ENCODE measurements at regions of chr2 and their contacts with region 1.

Region 1: DNA sequence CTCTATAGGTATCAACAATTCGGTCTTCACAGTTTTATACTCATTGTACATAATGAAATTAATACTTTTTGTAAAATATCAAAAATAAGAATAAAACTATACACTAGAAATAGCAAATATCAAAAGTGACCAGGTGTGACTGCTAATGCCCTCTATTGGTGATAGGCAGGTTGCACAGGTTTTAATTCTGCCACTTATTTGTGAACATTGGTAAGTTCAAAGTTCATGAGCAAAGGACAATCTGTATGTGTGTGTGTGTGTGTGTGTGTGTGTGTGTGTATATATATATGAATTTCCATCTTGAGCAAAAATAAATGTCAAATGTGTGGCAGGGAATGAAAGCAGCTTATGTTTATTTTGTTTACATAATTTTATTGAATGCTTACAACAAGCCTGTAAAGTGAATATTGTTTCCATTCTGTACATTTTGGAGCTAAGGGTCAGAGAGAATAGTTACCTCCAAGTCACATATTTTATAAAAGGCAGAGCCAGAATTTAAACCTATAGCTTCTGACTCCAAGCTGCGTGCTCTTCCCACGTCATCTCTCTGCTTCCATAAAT is 537.4 kb downstream of the CPS1 start:
- DNase-seq: peak; percentile 62
- ATAC-seq: peak; percentile 52
- H3K4me3 ChIP-seq: no peak overlapping the region
- H3K27ac ChIP-seq: no peak overlapping the region
- H3K4me1 ChIP-seq: no peaks in the 10 kb centered on the region
- H3K27me3 ChIP-seq: no peaks in the 10 kb centered on the region; a peak in 1 of 5 replicates
- CTCF ChIP-seq: peak; percentile 61
- EP300 ChIP-seq: no peak
- POLR2A ChIP-seq: no peak
- RAD21 ChIP-seq: no peak

Region 2: GRCh38 chr2:210617732-210618330 is 476.0 kb before region 1 on chr2:
- CTCF ChIA-PET with region 1: no interaction called
- POLR2A ChIA-PET with region 1: no interaction called
- in situ Hi-C with region 1: no loop called
- intact Hi-C with region 1: loop called (anchors 2 kb)
- DNase-seq: peak; percentile 64
- ATAC-seq: peak; percentile 96
- H3K4me3 ChIP-seq: no peak overlapping the region
- H3K27ac ChIP-seq: no peak overlapping the region
- H3K4me1 ChIP-seq: peaks cover 8% of the 10 kb centered on the region; the same call in 1 of the 2 replicates
- H3K27me3 ChIP-seq: no peaks in the 10 kb centered on the region
- CTCF ChIP-seq: peak; percentile 84
- EP300 ChIP-seq: no peak
- POLR2A ChIP-seq: no peak
- RAD21 ChIP-seq: peak; percentile 70

Region 3: GRCh38 chr2:210663631-210664089 is 430.2 kb before region 1 on chr2:
- CTCF ChIA-PET with region 1: no interaction called
- POLR2A ChIA-PET with region 1: no interaction called
- in situ Hi-C with region 1: no loop called
- intact Hi-C with region 1: loop called (anchors 5 kb)
- DNase-seq: peak; percentile 18
- ATAC-seq: peak; percentile 59; the same call in 2 of the 3 replicates
- H3K4me3 ChIP-seq: no peak overlapping the region
- H3K27ac ChIP-seq: no peak overlapping the region
- H3K4me1 ChIP-seq: peaks cover 11% of the 10 kb centered on the region
- H3K27me3 ChIP-seq: no peaks in the 10 kb centered on the region
- CTCF ChIP-seq: peak; percentile 49
- EP300 ChIP-seq: no peak
- POLR2A ChIP-seq: no peak
- RAD21 ChIP-seq: no peak

Region 4: DNA sequence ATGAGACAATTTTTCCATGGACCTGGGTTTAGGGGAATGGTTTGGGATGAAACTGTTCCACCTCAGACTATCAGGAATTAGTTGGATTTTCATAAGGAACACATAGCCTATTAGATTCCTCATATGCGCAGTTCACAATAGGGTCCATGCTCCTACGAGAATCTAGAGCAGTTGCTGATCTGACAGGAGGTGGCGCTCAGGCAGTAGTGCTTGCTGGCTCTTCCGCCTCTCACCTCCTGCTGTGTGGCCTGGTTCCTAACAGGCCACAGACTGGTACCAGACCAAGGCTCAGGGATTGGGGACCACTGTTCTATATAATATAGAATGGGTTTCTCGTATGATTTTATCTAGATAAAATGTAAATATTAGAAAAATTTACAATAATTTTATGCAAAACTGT is 198.7 kb before region 1 on chr2:
- CTCF ChIA-PET with region 1: no interaction called
- POLR2A ChIA-PET with region 1: no interaction called
- in situ Hi-C with region 1: no loop called
- intact Hi-C with region 1: loop called (anchors 2 kb)
- DNase-seq: peak; percentile 54
- ATAC-seq: peak; percentile 100
- H3K4me3 ChIP-seq: no peak overlapping the region
- H3K27ac ChIP-seq: no peak overlapping the region
- H3K4me1 ChIP-seq: peaks cover 14% of the 10 kb centered on the region; the same call in 1 of the 2 replicates
- H3K27me3 ChIP-seq: no peaks in the 10 kb centered on the region; a peak in 1 of 5 replicates
- CTCF ChIP-seq: peak; percentile 79
- EP300 ChIP-seq: no peak
- POLR2A ChIP-seq: no peak
- RAD21 ChIP-seq: peak; percentile 31; the same call in 1 of the 2 replicates

Measured in HepG2 (cell line).